CD4-positive, alpha-beta T cell (primary cell): ENCODE measurements at regions of chr19 and their contacts with region 1.

Region 1: GRCh38 chr19:4916292-4917082 is 7.2 kb downstream of the UHRF1 start:
- DNase-seq: peak; percentile 30 to 73 (median 46)
- ATAC-seq: peak; percentile 38
- H3K4me3 ChIP-seq: peak overlapping the region; percentile 82
- H3K4me3 Mint-ChIP-seq: peak overlapping the region; percentile 98
- H3K27ac ChIP-seq: peak overlapping the region; percentile 65 to 90
- H3K27ac Mint-ChIP-seq: peak overlapping the region; percentile 96
- H3K4me1 ChIP-seq: peaks cover 56% of the 10 kb centered on the region
- H3K4me1 Mint-ChIP-seq: peaks cover 38% of the 10 kb centered on the region
- H3K27me3 ChIP-seq: no peaks in the 10 kb centered on the region
- H3K27me3 Mint-ChIP-seq: no peaks in the 10 kb centered on the region
- CTCF ChIP-seq: no peak

Region 2: GRCh38 chr19:4638828-4639530 is 277.5 kb before region 1 on chr19 and contains the start of gene TNFAIP8L1:
- CTCF ChIA-PET with region 1: no interaction called
- POLR2A ChIA-PET with region 1: no interaction called
- intact Hi-C with region 1: no loop called
- DNase-seq: peak; percentile 98 to 100 (median 99)
- ATAC-seq: peak; percentile 96
- H3K4me3 ChIP-seq: peak within 1 kb of the TSS; percentile 91
- H3K4me3 Mint-ChIP-seq: peak within 1 kb of the TSS; percentile 91
- H3K27ac ChIP-seq: peak within 1 kb of the TSS; percentile 86 to 87
- H3K27ac Mint-ChIP-seq: peak within 1 kb of the TSS; percentile 94
- H3K4me1 ChIP-seq: peaks cover 59% of the 10 kb centered on the region
- H3K4me1 Mint-ChIP-seq: peaks cover 32% of the 10 kb centered on the region
- H3K27me3 ChIP-seq: no peaks in the 10 kb centered on the region
- H3K27me3 Mint-ChIP-seq: no peaks in the 10 kb centered on the region
- CTCF ChIP-seq: no peak
- total RNA-seq, gene TNFAIP8L1: 4.4 to 5.1 TPM

Region 3: GRCh38 chr19:4859697-4860096 is 56.8 kb before region 1 on chr19:
- CTCF ChIA-PET with region 1: no interaction called
- POLR2A ChIA-PET with region 1: no interaction called
- intact Hi-C with region 1: no loop called
- DNase-seq: no peak
- ATAC-seq: no peak
- H3K4me3 ChIP-seq: no peak overlapping the region
- H3K4me3 Mint-ChIP-seq: no peak overlapping the region
- H3K27ac ChIP-seq: no peak overlapping the region
- H3K27ac Mint-ChIP-seq: no peak overlapping the region
- H3K4me1 ChIP-seq: no peaks in the 10 kb centered on the region
- H3K4me1 Mint-ChIP-seq: no peaks in the 10 kb centered on the region
- H3K27me3 ChIP-seq: no peaks in the 10 kb centered on the region
- H3K27me3 Mint-ChIP-seq: no peaks in the 10 kb centered on the region
- CTCF ChIP-seq: no peak

Region 4: DNA sequence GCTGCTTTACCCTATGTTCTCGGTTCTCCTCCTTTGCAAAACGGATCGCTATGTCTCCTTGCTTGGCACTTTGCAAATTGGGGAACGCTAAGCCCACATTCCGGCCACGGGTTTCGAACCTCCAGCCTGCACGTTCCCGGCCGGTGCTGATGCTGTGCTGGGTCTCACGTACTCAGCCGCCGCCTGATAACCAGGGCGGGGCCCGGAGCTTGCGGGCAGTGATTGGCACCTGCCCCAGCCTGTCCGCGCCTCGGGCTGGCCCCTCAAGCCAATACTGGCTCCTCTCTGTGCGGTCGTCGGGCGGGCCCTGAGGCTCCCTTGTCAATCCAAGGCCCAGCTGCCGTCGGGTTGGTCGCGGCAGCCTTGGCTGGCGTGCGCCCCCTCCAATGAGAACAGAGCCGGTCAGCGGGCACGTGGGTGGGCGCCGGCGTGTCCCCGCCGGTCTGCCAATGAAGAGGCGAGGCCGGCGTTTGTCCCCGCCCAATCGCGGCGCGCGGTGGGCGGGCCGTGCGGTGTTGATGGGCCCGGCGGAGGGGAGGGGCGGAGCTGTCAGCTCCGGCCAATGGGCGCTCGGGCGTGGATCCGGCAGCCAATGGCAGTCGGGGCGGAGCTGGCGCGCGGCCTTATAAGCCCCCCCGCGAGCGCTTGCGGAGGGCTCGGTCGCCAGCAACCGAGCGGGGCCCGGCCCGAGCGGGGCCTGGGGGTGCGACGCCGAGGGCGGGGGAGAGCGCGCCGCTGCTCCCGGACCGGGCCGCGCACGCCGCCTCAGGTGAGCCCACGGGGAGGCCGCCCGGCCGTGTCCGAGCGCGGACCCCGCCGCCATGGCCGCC is 52.2 kb after region 1 on chr19 and contains the start of gene KDM4B:
- CTCF ChIA-PET with region 1: interaction called, 9 read pairs
- POLR2A ChIA-PET with region 1: interaction called, 131 read pairs
- intact Hi-C with region 1: loop called (anchors 2 kb)
- DNase-seq: peak; percentile 96 to 100 (median 98)
- ATAC-seq: peak; percentile 88
- H3K4me3 ChIP-seq: peak within 1 kb of the TSS; percentile 63
- H3K4me3 Mint-ChIP-seq: peak within 1 kb of the TSS; percentile 92
- H3K27ac ChIP-seq: peak within 1 kb of the TSS; percentile 18 to 59
- H3K27ac Mint-ChIP-seq: peak within 1 kb of the TSS; percentile 87
- H3K4me1 ChIP-seq: peaks cover 44% of the 10 kb centered on the region
- H3K4me1 Mint-ChIP-seq: peaks cover 32% of the 10 kb centered on the region
- H3K27me3 ChIP-seq: no peaks in the 10 kb centered on the region
- H3K27me3 Mint-ChIP-seq: no peaks in the 10 kb centered on the region
- CTCF ChIP-seq: no peak
- total RNA-seq, gene KDM4B: 41.8 to 42.5 TPM